ENCODE measurements at regions of chr15 and their contacts with region 1.

Region 1: DNA sequence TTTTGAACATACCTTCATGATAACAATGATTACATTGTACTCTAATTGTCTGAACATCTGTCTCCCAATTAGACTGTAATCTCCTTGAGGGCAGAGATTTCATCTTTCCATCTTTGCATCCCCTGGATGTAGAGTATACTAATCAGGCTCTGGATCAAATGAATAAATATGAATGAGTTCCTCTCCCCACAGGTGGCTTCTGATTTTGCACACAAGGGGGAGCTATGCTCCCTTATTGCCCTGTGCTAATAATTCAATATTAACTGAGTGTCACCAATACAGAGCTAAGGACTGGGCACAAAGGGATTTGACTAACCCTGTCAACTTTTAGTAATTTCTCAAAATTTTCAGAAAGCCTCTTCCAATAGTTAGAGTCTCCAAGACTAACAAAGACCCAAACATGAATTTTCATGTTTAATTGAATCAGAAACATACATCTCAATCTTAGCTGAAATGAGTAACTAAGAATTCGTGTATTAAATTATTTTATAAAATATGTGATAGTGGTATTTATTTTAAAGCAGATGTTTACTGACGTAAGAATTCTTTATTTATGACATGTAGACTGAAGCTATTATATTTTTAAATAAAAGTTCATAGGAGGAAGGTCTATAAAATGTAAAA is 3.0 kb downstream of the DUOXA1 start:
- DNase-seq: no peak
- H3K4me3 ChIP-seq: no peak overlapping the region
- H3K27ac ChIP-seq: no peak overlapping the region
- H3K4me1 ChIP-seq: peaks cover 6 to 17% (median 12%) of the 10 kb centered on the region in 6 donors
- H3K27me3 ChIP-seq: peaks cover 2 to 79% (median 43%) of the 10 kb centered on the region in 7 donors
- CTCF ChIP-seq: peak; percentile 27 to 77 (median 57)
- POLR2A ChIP-seq: no peak

Region 2: DNA sequence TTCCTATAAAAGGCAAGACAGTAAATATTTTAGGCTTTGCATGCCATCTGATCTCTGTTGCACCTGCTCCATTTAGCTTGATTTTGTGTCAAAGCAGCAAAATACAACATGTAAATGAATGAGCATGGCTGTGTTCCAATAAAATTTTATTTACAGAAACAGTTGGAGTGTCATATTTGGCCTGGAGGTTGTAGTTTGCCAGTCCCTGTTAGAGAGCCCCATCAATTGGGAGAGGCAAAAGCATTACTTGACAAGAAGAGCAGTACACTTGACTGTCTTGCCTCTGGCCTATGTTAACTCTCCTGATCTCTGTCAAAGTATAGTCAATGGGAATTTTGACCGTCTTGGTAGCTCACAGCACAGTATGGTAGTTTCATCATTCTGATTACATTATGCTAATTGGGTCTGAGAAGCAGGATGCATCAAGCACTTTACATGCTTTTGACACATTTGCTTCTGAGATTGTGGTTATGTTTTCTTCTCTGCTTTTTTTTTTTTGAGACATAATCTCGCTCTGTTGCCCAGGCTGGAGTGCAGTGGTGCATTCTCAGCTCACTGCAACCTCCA is 160.8 kb after region 1 on chr15:
- intact Hi-C with region 1: loop called (anchors 10 kb)
- DNase-seq: no peak
- H3K4me3 ChIP-seq: no peak overlapping the region
- H3K27ac ChIP-seq: no peak overlapping the region
- H3K4me1 ChIP-seq: no peaks in the 10 kb centered on the region
- H3K27me3 ChIP-seq: peaks cover 0 to 19% (median 0%) of the 10 kb centered on the region in 7 donors
- CTCF ChIP-seq: no peak
- POLR2A ChIP-seq: no peak

Measured in spleen (tissue), 13 donors.